CD4-positive, alpha-beta T cell (primary cell): ENCODE measurements at regions of chr15 and their contacts with region 1.

Region 1: GRCh38 chr15:99495430-99496301 is 70.1 kb upstream of the MEF2A start:
- DNase-seq: peak in 1 of 14 experiments; percentile 18
- ATAC-seq: peak; percentile 39
- H3K4me3 ChIP-seq: no peak overlapping the region
- H3K4me3 Mint-ChIP-seq: peak overlapping the region; percentile 64
- H3K27ac ChIP-seq: no peak overlapping the region
- H3K27ac Mint-ChIP-seq: peak overlapping the region; percentile 80
- H3K4me1 ChIP-seq: peaks cover 19% of the 10 kb centered on the region
- H3K4me1 Mint-ChIP-seq: peaks cover 23% of the 10 kb centered on the region
- H3K27me3 ChIP-seq: no peaks in the 10 kb centered on the region
- H3K27me3 Mint-ChIP-seq: no peaks in the 10 kb centered on the region
- CTCF ChIP-seq: no peak

Region 2: DNA sequence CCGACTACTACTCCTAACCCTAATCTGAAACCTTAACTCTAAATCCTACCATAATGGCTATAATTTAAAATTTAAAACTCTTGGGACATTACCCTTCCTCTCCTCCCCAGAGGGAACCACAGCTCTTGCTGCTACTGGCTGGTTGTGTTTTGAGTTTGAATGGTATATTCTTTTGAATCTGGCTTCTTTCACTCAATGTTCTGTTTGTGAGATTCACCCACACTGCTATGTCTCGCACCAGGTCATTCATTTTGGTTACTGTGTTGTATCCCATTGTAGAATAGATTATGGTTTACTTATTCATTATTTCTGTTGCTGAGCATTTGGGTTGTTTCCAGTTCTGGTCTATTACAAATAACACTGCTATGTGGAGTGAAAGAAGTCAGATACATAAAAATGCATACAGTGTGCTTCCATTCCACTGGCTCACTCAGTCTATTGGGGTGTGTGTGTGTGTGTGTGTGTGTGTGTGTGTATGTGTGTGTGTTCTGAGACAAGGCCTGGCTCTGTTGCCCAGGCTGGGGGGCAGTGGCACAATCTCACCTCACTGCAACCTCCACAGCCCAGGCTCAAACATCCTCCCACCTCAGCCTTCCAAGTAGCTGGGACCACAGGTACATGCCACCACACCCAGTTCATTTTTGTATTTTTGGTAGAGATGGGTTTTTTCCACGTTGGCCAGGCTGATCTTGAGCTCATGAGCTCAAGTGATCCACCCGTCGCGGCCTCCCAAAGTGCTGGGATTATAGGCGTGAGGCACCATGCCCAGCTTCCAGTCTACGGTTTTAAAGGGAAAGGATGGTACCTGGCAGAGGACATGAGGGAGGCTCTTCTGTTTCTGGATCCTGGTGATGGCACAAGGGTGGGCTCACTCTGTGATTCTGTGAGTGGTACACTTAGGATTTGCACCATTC is 410.0 kb before region 1 on chr15:
- CTCF ChIA-PET with region 1: no interaction called
- POLR2A ChIA-PET with region 1: no interaction called
- intact Hi-C with region 1: no loop called
- DNase-seq: no peak
- ATAC-seq: no peak
- H3K4me3 ChIP-seq: no peak overlapping the region
- H3K4me3 Mint-ChIP-seq: no peak overlapping the region
- H3K27ac ChIP-seq: no peak overlapping the region
- H3K27ac Mint-ChIP-seq: no peak overlapping the region
- H3K4me1 ChIP-seq: no peaks in the 10 kb centered on the region
- H3K4me1 Mint-ChIP-seq: no peaks in the 10 kb centered on the region
- H3K27me3 ChIP-seq: no peaks in the 10 kb centered on the region
- H3K27me3 Mint-ChIP-seq: peaks cover 6% of the 10 kb centered on the region
- CTCF ChIP-seq: no peak

Region 3: GRCh38 chr15:99565299-99566156 is 69.9 kb after region 1 on chr15 and contains the start of gene MEF2A:
- CTCF ChIA-PET with region 1: no interaction called
- POLR2A ChIA-PET with region 1: interaction called, 3 read pairs
- intact Hi-C with region 1: loop called in 1 of 2 experiments (anchors 5 kb)
- DNase-seq: peak; percentile 84 to 96 (median 88)
- ATAC-seq: peak; percentile 69
- H3K4me3 ChIP-seq: peak within 1 kb of the TSS; percentile 97
- H3K4me3 Mint-ChIP-seq: peak within 1 kb of the TSS; percentile 97
- H3K27ac ChIP-seq: peak within 1 kb of the TSS; percentile 86 to 94
- H3K27ac Mint-ChIP-seq: peak within 1 kb of the TSS; percentile 96
- H3K4me1 ChIP-seq: peaks cover 22% of the 10 kb centered on the region
- H3K4me1 Mint-ChIP-seq: peaks cover 57% of the 10 kb centered on the region
- H3K27me3 ChIP-seq: no peaks in the 10 kb centered on the region
- H3K27me3 Mint-ChIP-seq: no peaks in the 10 kb centered on the region
- CTCF ChIP-seq: no peak
- total RNA-seq, gene MEF2A: 23.2 to 24.9 TPM